Activated CD8-positive, alpha-beta memory T cell treated with anti-CD3 and anti-CD28 coated beads, Interleukin-2, amount 10 ng/mL, durations not matched to agents 7 days and 5 days (primary cell): ENCODE measurements at regions of chr6 and their contacts with region 1.

Region 1: GRCh38 chr6:109187399-109188114 is 92.2 kb downstream of the CEP57L1 start:
- DNase-seq: peak; percentile 67
- ATAC-seq: peak; percentile 65
- H3K4me3 Mint-ChIP-seq: no peak overlapping the region
- H3K27ac Mint-ChIP-seq: no peak overlapping the region
- H3K4me1 Mint-ChIP-seq: peaks cover 20% of the 10 kb centered on the region
- H3K27me3 Mint-ChIP-seq: peaks cover 46% of the 10 kb centered on the region

Region 2: DNA sequence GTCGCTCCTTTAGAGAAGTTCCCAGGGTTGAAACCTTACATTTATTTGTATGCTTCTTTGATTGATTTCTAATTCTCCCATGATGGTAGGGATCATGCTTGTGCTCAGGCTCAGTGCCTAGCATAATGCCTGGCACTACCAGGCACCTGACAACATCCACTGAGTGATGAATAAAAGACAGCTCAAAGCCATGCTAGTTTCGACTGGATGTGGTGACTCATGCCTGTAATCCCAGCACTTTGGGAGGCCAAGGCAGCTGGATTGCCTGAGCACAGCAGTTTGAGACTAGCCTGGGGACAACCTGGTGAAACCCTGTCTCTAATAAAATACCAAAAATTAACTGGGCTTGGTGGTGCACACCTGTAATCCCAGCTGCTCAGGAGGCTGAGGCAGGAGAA is 206.3 kb after region 1 on chr6:
- CTCF ChIA-PET with region 1: interaction called, 10 read pairs
- DNase-seq: no peak
- ATAC-seq: no peak
- H3K4me3 Mint-ChIP-seq: no peak overlapping the region
- H3K27ac Mint-ChIP-seq: no peak overlapping the region
- H3K4me1 Mint-ChIP-seq: peaks cover 7% of the 10 kb centered on the region
- H3K27me3 Mint-ChIP-seq: no peaks in the 10 kb centered on the region